Cardiac septum (tissue), 1 donor: ENCODE measurements at regions of chr2 and their contacts with region 1.

Region 1: GRCh38 chr2:71243634-71244304 is 16.9 kb upstream of the PAIP2B start:
- DNase-seq: peak; percentile 83

Region 2: GRCh38 chr2:71276311-71277146 is 32.8 kb after region 1 on chr2:
- intact Hi-C with region 1: loop called (anchors 5 kb)
- DNase-seq: peak; percentile 96